Heart right ventricle (tissue), 16 donors: ENCODE measurements at regions of chr12 and their contacts with region 1.

Region 1: DNA sequence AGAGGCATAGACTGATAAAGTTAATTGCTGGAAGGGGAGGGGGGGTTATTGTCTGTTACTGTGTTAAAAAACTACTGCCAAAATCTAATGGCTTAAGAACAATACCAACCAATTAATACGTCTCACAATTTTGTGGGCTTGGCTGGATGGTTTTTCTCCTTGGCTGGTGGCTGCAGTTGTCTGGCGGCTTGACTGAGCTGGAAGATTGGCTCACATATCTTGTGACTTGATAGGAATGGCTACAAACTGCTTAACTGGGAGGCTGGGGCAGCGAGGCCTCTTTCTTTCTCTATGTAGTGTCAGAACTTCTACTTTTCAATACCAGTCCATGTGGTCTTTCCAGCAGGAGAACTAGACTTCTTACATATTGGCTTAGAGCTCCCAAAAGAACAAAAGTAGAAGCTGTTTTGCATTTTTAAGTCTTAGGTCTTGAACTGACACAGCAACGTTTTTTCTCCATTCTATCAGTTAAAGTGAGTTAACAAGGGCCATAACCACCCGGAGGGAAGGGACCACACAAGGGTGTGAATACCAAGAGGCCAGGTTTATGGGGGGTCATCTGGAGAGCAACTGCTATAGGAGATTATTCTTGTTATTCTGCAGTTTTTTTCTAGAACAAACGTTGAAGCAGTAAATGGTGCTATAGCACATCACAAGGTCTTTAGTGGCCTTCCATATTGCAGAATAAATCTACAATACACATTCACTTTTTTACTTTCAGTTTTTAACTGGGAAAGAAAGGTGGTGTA is 46.9 kb downstream of the ZDHHC17 start:
- DNase-seq: no peak
- ATAC-seq: peak in 4 of 8 donors; percentile 38 to 62 (median 49)
- H3K4me3 ChIP-seq: no peak overlapping the region
- H3K27ac ChIP-seq: peak overlapping the region in 1 of 10 donors; percentile 21
- H3K4me1 ChIP-seq: peaks cover 0 to 10% (median 0%) of the 10 kb centered on the region in 9 donors
- H3K27me3 ChIP-seq: no peaks in the 10 kb centered on the region
- CTCF ChIP-seq: no peak

Region 2: GRCh38 chr12:76031537-76032073 is 779.2 kb before region 1 on chr12 and contains the start of gene PHLDA1:
- intact Hi-C with region 1: no loop called
- DNase-seq: peak; percentile 96
- ATAC-seq: peak; percentile 90 to 97 (median 94)
- H3K4me3 ChIP-seq: peak within 1 kb of the TSS; percentile 63 to 91 (median 80)
- H3K27ac ChIP-seq: peak within 1 kb of the TSS; percentile 90 to 99 (median 96)
- H3K4me1 ChIP-seq: peaks cover 0 to 48% (median 21%) of the 10 kb centered on the region in 9 donors
- H3K27me3 ChIP-seq: peaks cover 0 to 21% (median 0%) of the 10 kb centered on the region in 7 donors
- CTCF ChIP-seq: peak; percentile 26 to 82 (median 64)
- total RNA-seq, gene PHLDA1: 1.5 to 43.5 (median 23.3) TPM

Region 3: DNA sequence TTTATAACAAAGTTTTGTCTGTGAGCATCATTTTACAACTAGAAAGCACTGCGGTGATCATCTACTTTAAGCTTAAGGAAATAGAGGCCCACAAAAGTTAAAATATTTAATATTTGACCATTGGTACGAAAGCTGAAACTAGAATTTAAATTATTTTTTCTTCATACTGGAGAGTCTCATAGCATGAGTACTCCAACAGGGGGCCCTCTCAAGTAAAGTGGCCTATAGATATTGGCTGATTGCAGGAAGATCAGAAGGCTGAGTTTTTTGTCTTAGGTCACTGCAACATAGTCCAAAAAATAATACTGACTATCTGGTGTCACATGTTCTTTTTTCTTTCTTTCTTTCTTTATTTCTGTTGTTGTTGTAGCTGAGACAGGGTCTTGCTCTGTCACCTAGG is 122.2 kb before region 1 on chr12:
- intact Hi-C with region 1: no loop called
- DNase-seq: no peak
- ATAC-seq: no peak
- H3K4me3 ChIP-seq: no peak overlapping the region
- H3K27ac ChIP-seq: peak overlapping the region in 1 of 10 donors; percentile 52
- H3K4me1 ChIP-seq: peaks cover 0 to 27% (median 14%) of the 10 kb centered on the region in 9 donors
- H3K27me3 ChIP-seq: no peaks in the 10 kb centered on the region
- CTCF ChIP-seq: peak in 3 of 9 donors; percentile 12 to 32 (median 29)

Region 4: DNA sequence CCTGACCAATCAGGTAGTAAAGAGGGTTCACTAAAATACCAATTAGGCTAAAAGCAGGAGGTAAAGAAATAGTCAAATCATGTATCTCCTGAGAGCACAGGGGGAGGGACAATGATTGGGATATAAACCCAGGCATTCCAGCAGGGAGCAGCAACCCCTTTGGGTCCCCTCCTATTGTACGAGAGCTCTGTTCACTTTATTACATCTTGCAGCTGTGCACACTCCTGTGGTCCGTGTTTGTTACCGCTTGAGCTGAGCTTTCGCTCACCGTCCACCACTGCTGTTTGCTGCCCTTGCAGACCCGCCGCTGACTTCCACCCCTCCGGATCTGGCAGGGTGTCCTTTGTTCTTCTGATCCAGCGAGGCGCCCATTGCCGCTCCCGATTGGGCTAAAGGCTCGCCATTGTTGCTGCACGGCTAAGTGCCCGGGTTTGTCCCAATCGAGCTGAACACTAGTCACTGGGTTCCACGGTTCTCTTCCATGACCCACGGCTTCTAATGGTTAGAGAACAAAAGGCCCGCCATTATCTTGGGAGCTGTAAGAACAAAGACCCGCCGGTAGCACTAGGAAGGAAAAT is 190.4 kb after region 1 on chr12:
- intact Hi-C with region 1: loop called in 1 of 10 experiments (anchors 10 kb)
- DNase-seq: no peak
- ATAC-seq: no peak
- H3K4me3 ChIP-seq: no peak overlapping the region
- H3K27ac ChIP-seq: no peak overlapping the region
- H3K4me1 ChIP-seq: no peaks in the 10 kb centered on the region
- H3K27me3 ChIP-seq: peaks cover 0 to 3% (median 0%) of the 10 kb centered on the region in 7 donors
- CTCF ChIP-seq: no peak